Activated naive CD4-positive, alpha-beta T cell treated with anti-CD3 and anti-CD28 coated beads for 36 hours (primary cell): ENCODE measurements at regions of chr3 and their contacts with region 1.

Region 1: DNA sequence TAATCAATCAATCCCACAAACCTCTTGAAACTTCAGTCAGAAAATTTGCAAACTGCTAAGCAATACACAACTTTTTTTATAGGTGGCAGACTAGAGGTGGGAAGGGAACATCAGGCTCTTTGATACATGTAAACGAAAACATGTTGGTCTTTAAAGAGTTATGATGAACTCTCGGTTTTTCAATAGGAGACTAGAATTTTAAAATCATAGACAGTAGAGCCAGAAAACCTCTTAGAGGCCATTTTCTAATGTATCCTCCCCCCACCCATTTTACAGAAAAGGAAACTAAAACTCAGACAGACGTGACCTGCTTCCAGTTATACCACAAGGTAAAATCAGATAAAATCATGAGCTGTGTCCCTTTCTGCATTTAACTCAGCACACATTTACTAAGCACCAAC is 179.1 kb upstream of the LPP start:
- DNase-seq: no peak
- H3K4me3 Mint-ChIP-seq: peak overlapping the region; percentile 50
- H3K27ac Mint-ChIP-seq: peak overlapping the region; percentile 82
- H3K4me1 Mint-ChIP-seq: peaks cover 50% of the 10 kb centered on the region
- H3K27me3 Mint-ChIP-seq: no peaks in the 10 kb centered on the region

Region 2: GRCh38 chr3:187770224-187770623 is 204.6 kb before region 1 on chr3:
- CTCF ChIA-PET with region 1: interaction called, 3 read pairs
- intact Hi-C with region 1: loop called (anchors 1 kb)
- DNase-seq: peak; percentile 73
- H3K4me3 Mint-ChIP-seq: no peak overlapping the region
- H3K27ac Mint-ChIP-seq: peak overlapping the region; percentile 82
- H3K4me1 Mint-ChIP-seq: peaks cover 38% of the 10 kb centered on the region
- H3K27me3 Mint-ChIP-seq: no peaks in the 10 kb centered on the region

Region 3: GRCh38 chr3:187986514-187986934 is 11.7 kb after region 1 on chr3:
- CTCF ChIA-PET with region 1: interaction called, 4 read pairs
- intact Hi-C with region 1: loop called (anchors 1 kb)
- DNase-seq: peak; percentile 79
- H3K4me3 Mint-ChIP-seq: no peak overlapping the region
- H3K27ac Mint-ChIP-seq: peak overlapping the region; percentile 22
- H3K4me1 Mint-ChIP-seq: peaks cover 33% of the 10 kb centered on the region
- H3K27me3 Mint-ChIP-seq: no peaks in the 10 kb centered on the region

Region 4: GRCh38 chr3:188092648-188093047 is 117.8 kb after region 1 on chr3:
- CTCF ChIA-PET with region 1: no interaction called
- intact Hi-C with region 1: loop called (anchors 1 kb)
- DNase-seq: peak; percentile 80
- H3K4me3 Mint-ChIP-seq: no peak overlapping the region
- H3K27ac Mint-ChIP-seq: peak overlapping the region; percentile 13
- H3K4me1 Mint-ChIP-seq: peaks cover 8% of the 10 kb centered on the region
- H3K27me3 Mint-ChIP-seq: no peaks in the 10 kb centered on the region

Region 5: GRCh38 chr3:188294823-188295487 is 320.1 kb after region 1 on chr3:
- CTCF ChIA-PET with region 1: no interaction called
- intact Hi-C with region 1: loop called (anchors 2 kb)
- DNase-seq: peak; percentile 49
- H3K4me3 Mint-ChIP-seq: no peak overlapping the region
- H3K27ac Mint-ChIP-seq: peak overlapping the region; percentile 69
- H3K4me1 Mint-ChIP-seq: peaks cover 85% of the 10 kb centered on the region
- H3K27me3 Mint-ChIP-seq: no peaks in the 10 kb centered on the region

Region 6: GRCh38 chr3:188954590-188955208 is 979.8 kb after region 1 on chr3:
- CTCF ChIA-PET with region 1: interaction called, 4 read pairs
- intact Hi-C with region 1: loop called (anchors 5 kb)
- DNase-seq: peak; percentile 91
- H3K4me3 Mint-ChIP-seq: no peak overlapping the region
- H3K27ac Mint-ChIP-seq: no peak overlapping the region
- H3K4me1 Mint-ChIP-seq: peaks cover 39% of the 10 kb centered on the region
- H3K27me3 Mint-ChIP-seq: no peaks in the 10 kb centered on the region